ENCODE measurements at regions of chr4 and their contacts with region 1.

Region 1: DNA sequence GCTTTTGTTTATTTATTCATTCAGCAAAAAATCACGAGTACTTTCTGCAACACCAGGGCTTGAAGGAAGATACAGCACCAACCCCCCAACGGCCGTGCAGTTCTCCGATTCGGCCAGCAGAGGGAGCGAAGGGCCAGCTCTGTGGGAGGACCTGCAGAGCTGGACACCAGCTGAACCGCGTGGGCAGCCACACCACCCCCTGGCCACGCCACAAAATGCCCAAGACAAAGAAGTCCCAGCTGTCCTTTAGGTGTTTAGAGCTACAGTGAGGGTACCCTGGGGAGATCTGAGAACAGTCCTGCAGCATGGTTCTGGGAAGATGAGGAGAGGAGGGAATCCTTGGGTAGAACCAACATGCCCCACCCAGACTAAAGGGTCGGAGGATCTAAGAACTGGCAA is 83.1 kb downstream of the RELL1 start:
- DNase-seq: peak; percentile 94

Region 2: DNA sequence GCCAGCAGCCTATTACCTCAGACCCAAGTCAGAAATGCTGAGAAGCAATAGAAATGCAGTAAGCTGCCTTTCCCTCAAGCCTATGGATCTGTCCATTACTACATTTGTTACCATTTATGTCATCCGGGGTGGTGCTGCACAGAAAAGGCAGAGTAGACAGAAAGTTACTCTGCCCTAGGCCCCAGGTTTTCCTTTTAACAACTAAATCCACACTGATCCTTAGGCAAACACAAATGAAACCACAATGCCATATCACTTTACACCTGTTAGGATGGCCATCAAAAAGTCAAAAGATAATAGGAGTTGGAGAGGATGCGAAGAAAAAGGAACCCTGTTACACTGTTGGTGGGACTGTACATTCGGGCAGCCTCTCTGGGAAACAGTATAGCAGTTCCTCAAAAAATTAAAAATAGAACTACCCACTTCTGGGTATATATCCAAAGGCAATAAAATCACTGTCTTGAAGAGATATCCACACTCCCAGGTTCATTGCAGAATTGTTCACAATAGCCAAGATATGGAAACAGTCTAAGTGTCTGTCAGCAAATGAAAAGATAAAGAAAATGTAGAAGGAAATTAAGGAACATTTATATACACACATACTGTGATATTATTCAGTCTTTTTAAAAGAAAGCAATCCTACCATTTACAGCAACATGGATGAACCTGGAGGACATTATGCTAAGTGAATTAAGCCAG is 172.2 kb before region 1 on chr4:
- intact Hi-C with region 1: no loop called
- DNase-seq: no peak

Region 3: DNA sequence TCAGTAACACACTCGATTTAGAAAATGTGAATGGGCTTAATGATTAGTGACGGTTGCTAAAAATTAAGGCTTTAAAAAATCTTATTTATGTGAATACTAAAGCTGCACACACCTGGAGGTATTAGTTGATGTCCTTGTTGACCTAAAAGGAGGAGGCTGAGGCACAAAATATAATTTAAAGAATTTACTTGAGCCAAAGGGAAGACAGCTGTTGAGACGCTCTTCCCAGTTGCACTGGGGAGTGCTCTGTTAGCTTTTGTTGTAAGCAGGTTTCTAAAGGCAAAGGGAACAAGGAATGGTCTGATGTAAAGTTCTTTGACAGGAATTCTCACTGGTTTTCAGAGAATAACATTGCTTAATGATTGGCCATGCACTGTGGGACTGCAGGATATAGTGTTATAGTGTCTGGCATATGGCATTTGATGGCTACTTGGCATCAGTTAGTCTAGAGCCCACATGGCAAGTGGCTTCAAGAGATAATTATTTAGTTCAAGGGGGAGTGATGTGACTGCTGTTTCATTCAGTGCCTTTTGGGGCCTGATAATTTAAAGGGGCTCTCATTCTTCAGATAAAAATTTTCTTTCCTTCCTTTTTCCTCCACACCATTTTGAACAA is 192.6 kb after region 1 on chr4:
- intact Hi-C with region 1: loop called (anchors 5 kb)
- DNase-seq: no peak

Region 4: GRCh38 chr4:37802068-37802666 is 199.1 kb after region 1 on chr4:
- intact Hi-C with region 1: loop called (anchors 5 kb)
- DNase-seq: no peak

Region 5: GRCh38 chr4:38034986-38035882 is 432.2 kb after region 1 on chr4:
- intact Hi-C with region 1: loop called in 1 of 2 experiments (anchors 10 kb)
- DNase-seq: no peak

Measured in posterior vena cava (tissue), 2 donors.